ENCODE measurements at regions of chr3 and their contacts with region 1.

Region 1: GRCh38 chr3:191444569-191444968 is 16.4 kb upstream of the PYDC2 start:
- DNase-seq: no peak
- H3K4me3 ChIP-seq: no peak overlapping the region
- H3K27ac ChIP-seq: no peak overlapping the region
- H3K4me1 ChIP-seq: no peaks in the 10 kb centered on the region
- H3K27me3 ChIP-seq: no peaks in the 10 kb centered on the region
- CTCF ChIP-seq: no peak

Region 2: DNA sequence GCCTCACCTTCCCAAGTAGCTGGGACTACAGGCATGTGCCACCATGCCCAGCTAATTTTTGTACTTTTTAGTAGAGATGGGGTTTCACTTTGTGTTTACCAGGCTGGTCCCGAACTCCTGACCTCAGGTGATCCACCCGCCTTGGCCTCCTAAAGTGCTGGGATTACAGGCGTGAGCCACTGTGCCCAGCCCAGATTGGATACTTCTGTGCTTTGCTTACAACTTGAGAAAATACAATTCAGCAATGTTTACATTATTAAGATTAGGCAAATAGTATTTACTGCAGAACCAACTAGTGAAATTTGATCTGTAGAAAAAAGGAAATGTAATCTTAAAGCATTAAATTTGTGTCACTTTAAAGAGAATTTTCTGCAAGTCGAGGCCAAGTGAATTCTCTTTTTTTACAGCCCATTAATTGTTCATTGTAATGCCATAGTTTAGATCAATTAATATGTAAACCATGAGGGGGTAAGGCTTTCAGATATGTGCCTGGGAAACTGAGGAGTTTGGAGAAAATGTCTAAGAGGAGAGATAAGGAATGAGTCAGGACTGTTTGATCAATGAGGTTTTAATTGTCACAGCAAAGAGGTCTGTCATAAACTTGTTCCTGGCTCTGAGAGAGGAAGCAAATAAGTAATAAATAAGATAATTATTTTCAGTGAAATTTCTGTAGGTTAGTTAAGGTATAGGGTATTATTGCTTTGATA is 31.6 kb after region 1 on chr3:
- CTCF ChIA-PET with region 1: no interaction called
- POLR2A ChIA-PET with region 1: no interaction called
- intact Hi-C with region 1: loop called (anchors 2 kb)
- DNase-seq: peak in 1 of 2 experiments; percentile 58
- H3K4me3 ChIP-seq: no peak overlapping the region
- H3K27ac ChIP-seq: no peak overlapping the region
- H3K4me1 ChIP-seq: peaks cover 4% of the 10 kb centered on the region; the same call in 1 of the 2 replicates
- H3K27me3 ChIP-seq: no peaks in the 10 kb centered on the region
- CTCF ChIP-seq: no peak

Measured in PC-9 (cell line).